ENCODE measurements at regions of chr3 and their contacts with region 1.

Region 1: DNA sequence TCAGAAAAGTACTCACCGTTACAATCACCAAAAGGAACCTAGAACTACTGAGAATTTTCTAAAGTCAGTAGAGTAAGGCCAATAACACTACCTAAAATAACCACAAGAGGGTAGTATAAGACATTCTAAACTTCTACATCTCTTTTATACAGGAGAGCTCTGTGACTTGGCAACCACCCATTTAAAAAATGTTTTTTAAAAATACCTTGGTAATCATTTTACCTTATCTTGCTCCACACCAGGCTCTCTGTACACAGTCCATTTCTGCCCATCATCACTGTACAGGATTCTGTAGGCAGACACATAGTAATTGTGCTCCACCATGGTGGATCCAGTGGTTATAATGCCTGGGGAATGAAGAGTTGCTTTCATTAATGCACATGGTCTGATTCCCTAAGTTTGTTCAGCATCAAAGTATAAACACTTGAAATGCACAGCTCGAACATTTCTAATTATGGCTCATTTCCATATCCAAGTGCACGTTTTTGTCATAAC is 54.5 kb downstream of the ST3GAL6 start:
- DNase-seq: peak; percentile 41
- H3K27ac ChIP-seq: no peak overlapping the region
- CTCF ChIP-seq: peak; percentile 72

Region 2: GRCh38 chr3:98596541-98597500 is 220.8 kb before region 1 on chr3:
- CTCF ChIA-PET with region 1: interaction called, 21 read pairs
- POLR2A ChIA-PET with region 1: no interaction called
- DNase-seq: peak; percentile 32
- H3K27ac ChIP-seq: no peak overlapping the region
- CTCF ChIP-seq: peak; percentile 58

Region 3: DNA sequence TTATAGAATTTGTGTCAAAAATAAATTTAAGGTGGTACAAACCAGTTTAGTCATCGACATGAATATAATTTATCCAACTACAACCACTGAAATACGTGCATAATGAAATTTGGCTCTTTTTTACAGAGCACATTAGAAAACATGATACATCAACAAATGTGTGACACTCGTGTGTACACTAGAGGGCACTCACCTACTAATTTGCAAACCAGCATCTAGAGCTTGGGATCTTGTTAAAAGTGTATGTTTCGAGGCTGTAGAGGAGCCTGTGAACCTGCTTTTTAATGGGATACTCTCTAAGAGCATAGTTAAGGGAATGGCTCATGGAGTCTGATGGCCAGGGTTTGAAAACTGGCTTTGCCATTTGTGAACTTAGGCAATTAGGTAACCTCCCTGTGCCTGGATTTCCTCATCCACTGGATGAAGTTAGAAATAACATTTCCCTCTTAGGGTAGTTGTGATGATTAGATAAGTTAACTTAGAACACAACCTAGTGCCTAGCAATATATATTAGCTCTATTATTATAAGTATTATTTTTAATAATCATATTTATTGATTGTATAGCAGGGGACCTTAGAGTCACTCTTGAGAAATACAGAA is 215.4 kb before region 1 on chr3:
- CTCF ChIA-PET with region 1: interaction called, 21 read pairs
- POLR2A ChIA-PET with region 1: no interaction called
- DNase-seq: peak; percentile 45
- H3K27ac ChIP-seq: no peak overlapping the region
- CTCF ChIP-seq: peak; percentile 87

Region 4: GRCh38 chr3:98657457-98657856 is 160.1 kb before region 1 on chr3:
- CTCF ChIA-PET with region 1: no interaction called
- POLR2A ChIA-PET with region 1: no interaction called
- DNase-seq: no peak
- H3K27ac ChIP-seq: no peak overlapping the region
- CTCF ChIP-seq: no peak

Region 5: GRCh38 chr3:98778852-98779413 is 38.7 kb before region 1 on chr3:
- CTCF ChIA-PET with region 1: no interaction called
- POLR2A ChIA-PET with region 1: no interaction called
- DNase-seq: peak; percentile 65
- H3K27ac ChIP-seq: peak overlapping the region; percentile 24; the same call in 1 of the 2 replicates
- CTCF ChIP-seq: no peak

Region 6: GRCh38 chr3:98994128-98994762 is 176.7 kb after region 1 on chr3:
- CTCF ChIA-PET with region 1: interaction called, 31 read pairs
- POLR2A ChIA-PET with region 1: no interaction called
- DNase-seq: peak; percentile 43
- H3K27ac ChIP-seq: no peak overlapping the region
- CTCF ChIP-seq: peak; percentile 74

Region 7: GRCh38 chr3:99041747-99042146 is 224.2 kb after region 1 on chr3:
- CTCF ChIA-PET with region 1: no interaction called
- POLR2A ChIA-PET with region 1: no interaction called
- DNase-seq: no peak
- H3K27ac ChIP-seq: no peak overlapping the region
- CTCF ChIP-seq: no peak

Measured in RWPE1 (cell line).